ENCODE measurements at regions of chr3 and their contacts with region 1.

Region 1: GRCh38 chr3:3334491-3334890 is 155.0 kb upstream of the CRBN start:
- DNase-seq: no peak
- H3K4me3 ChIP-seq: no peak overlapping the region
- H3K4me3 Mint-ChIP-seq: no peak overlapping the region
- H3K27ac ChIP-seq: no peak overlapping the region
- H3K27ac Mint-ChIP-seq: no peak overlapping the region
- H3K4me1 ChIP-seq: no peaks in the 10 kb centered on the region
- H3K4me1 Mint-ChIP-seq: no peaks in the 10 kb centered on the region
- H3K27me3 ChIP-seq: no peaks in the 10 kb centered on the region
- H3K27me3 Mint-ChIP-seq: no peaks in the 10 kb centered on the region

Region 2: GRCh38 chr3:3170998-3171397 is 163.5 kb before region 1 on chr3:
- CTCF ChIA-PET with region 1: no interaction called
- POLR2A ChIA-PET with region 1: no interaction called
- DNase-seq: peak in 2 of 5 donors; percentile 18 to 46
- H3K4me3 ChIP-seq: no peak overlapping the region
- H3K4me3 Mint-ChIP-seq: peak overlapping the region in 4 of 7 donors; percentile 11 to 73 (median 47)
- H3K27ac ChIP-seq: no peak overlapping the region
- H3K27ac Mint-ChIP-seq: peak overlapping the region; percentile 74 to 98 (median 97)
- H3K4me1 ChIP-seq: peaks cover 61% of the 10 kb centered on the region
- H3K4me1 Mint-ChIP-seq: peaks cover 57 to 84% (median 79%) of the 10 kb centered on the region in 3 donors
- H3K27me3 ChIP-seq: no peaks in the 10 kb centered on the region
- H3K27me3 Mint-ChIP-seq: no peaks in the 10 kb centered on the region

Region 3: GRCh38 chr3:3316521-3316920 is 18.0 kb before region 1 on chr3:
- CTCF ChIA-PET with region 1: no interaction called
- POLR2A ChIA-PET with region 1: interaction called, 11 read pairs
- DNase-seq: no peak
- H3K4me3 ChIP-seq: no peak overlapping the region
- H3K4me3 Mint-ChIP-seq: no peak overlapping the region
- H3K27ac ChIP-seq: no peak overlapping the region
- H3K27ac Mint-ChIP-seq: no peak overlapping the region
- H3K4me1 ChIP-seq: no peaks in the 10 kb centered on the region
- H3K4me1 Mint-ChIP-seq: no peaks in the 10 kb centered on the region
- H3K27me3 ChIP-seq: no peaks in the 10 kb centered on the region
- H3K27me3 Mint-ChIP-seq: peaks cover 0 to 1% of the 10 kb centered on the region in 2 donors